Body of pancreas (tissue), 4 donors: ENCODE measurements at regions of chr9 and their contacts with region 1.

Region 1: DNA sequence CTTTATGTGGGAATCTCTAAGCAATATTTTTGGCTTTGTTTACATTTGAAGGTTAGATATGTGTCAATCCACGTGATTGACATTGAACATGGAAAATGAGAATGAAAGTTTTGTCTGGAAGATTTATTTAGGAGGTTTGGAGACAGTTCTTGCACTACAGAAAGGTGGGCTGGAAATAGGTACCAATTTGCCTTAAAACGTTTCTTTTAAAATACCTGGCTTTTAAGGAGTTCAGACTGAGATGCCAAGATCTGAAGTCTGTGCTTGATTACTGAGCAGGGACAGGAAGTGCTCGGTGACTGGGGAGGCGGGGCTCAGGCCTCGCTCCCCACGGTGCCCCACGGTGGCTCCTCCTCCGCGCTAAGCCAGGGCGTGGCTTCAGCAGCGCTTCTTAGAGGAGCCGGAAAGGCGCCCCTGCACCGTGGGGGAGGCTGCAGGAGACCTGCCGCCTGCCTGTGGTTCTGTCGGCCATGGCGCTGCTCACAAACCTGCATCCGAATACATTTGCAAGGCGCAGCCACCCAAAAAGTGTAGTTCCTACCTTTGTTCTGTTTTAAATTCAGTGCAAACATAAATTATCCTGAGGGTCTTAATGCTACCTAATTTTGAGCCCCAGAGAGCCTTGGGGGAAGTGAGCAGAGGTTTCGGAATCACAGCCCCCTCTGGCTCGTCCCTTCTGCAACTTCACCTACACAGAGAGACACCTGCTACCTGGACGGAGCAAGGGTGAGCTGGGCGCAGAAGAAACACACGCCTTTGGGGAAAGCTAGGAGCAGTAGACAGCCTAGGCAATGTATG is 49.2 kb downstream of the USP20 start:
- DNase-seq: peak; percentile 90 to 95 (median 94)
- ATAC-seq: peak; percentile 87
- H3K4me3 ChIP-seq: peak overlapping the region in 1 of 2 donors; percentile 20
- H3K27ac ChIP-seq: peak overlapping the region; percentile 56 to 81 (median 73)
- H3K4me1 ChIP-seq: peaks cover 30% of the 10 kb centered on the region
- H3K27me3 ChIP-seq: no peaks in the 10 kb centered on the region
- CTCF ChIP-seq: no peak
- POLR2A ChIP-seq: peak; percentile 39 to 78 (median 78)

Region 2: GRCh38 chr9:130042833-130043653 is 158.6 kb after region 1 on chr9 and contains the start of gene FNBP1:
- intact Hi-C with region 1: loop called (anchors 10 kb)
- DNase-seq: peak; percentile 69 to 80 (median 74)
- ATAC-seq: peak; percentile 88
- H3K4me3 ChIP-seq: peak within 1 kb of the TSS; percentile 71 to 85
- H3K27ac ChIP-seq: peak within 1 kb of the TSS; percentile 59 to 87 (median 80)
- H3K4me1 ChIP-seq: peaks cover 27% of the 10 kb centered on the region
- H3K27me3 ChIP-seq: no peaks in the 10 kb centered on the region
- CTCF ChIP-seq: no peak
- POLR2A ChIP-seq: peak; percentile 44 to 76 (median 58)
- total RNA-seq, gene FNBP1: 17.1 to 17.9 TPM

Region 3: GRCh38 chr9:130243015-130243734 is 358.8 kb after region 1 on chr9:
- intact Hi-C with region 1: loop called (anchors 10 kb)
- DNase-seq: peak; percentile 75 to 85 (median 76)
- ATAC-seq: peak; percentile 73
- H3K4me3 ChIP-seq: no peak overlapping the region
- H3K27ac ChIP-seq: no peak overlapping the region
- H3K4me1 ChIP-seq: peaks cover 9% of the 10 kb centered on the region
- H3K27me3 ChIP-seq: no peaks in the 10 kb centered on the region
- CTCF ChIP-seq: peak; percentile 84 to 91 (median 87)
- POLR2A ChIP-seq: no peak